ENCODE measurements at regions of chr9 and their contacts with region 1.

Region 1: DNA sequence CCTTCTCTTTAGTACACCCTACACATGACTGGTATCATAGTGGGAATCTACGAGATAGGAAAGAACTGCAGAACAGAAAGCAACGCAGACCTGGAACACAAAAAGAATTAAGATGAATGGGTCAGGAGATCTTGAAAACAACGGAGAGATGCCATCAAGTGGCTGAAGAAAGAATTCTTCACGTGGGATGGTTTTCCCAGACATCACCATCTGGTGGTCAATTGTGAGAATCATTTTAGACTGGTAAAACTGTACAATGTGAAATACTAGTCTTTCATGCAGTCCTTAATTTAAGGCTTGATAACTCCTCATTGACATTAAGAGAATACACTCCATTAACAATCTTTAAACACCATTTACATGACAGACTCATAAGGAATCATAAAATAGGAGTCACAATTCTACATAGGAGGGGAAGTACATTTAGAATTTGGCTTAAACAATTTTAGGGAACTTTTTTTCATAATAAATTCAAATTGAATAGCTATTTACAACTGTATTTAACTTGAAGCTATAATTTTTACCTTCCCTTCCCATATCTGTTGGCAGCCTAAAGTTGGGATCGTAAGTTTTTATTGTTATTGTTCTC is 128.4 kb upstream of the TRPM3 start:
- H3K4me3 Mint-ChIP-seq: no peak overlapping the region
- H3K27ac Mint-ChIP-seq: no peak overlapping the region
- H3K4me1 Mint-ChIP-seq: no peaks in the 10 kb centered on the region
- H3K27me3 Mint-ChIP-seq: peaks cover 1% of the 10 kb centered on the region

Region 2: GRCh38 chr9:70639853-70640814 is 609.7 kb before region 1 on chr9:
- intact Hi-C with region 1: loop called (anchors 2 kb)
- H3K4me3 Mint-ChIP-seq: no peak overlapping the region
- H3K27ac Mint-ChIP-seq: no peak overlapping the region
- H3K4me1 Mint-ChIP-seq: no peaks in the 10 kb centered on the region
- H3K27me3 Mint-ChIP-seq: no peaks in the 10 kb centered on the region

Region 3: DNA sequence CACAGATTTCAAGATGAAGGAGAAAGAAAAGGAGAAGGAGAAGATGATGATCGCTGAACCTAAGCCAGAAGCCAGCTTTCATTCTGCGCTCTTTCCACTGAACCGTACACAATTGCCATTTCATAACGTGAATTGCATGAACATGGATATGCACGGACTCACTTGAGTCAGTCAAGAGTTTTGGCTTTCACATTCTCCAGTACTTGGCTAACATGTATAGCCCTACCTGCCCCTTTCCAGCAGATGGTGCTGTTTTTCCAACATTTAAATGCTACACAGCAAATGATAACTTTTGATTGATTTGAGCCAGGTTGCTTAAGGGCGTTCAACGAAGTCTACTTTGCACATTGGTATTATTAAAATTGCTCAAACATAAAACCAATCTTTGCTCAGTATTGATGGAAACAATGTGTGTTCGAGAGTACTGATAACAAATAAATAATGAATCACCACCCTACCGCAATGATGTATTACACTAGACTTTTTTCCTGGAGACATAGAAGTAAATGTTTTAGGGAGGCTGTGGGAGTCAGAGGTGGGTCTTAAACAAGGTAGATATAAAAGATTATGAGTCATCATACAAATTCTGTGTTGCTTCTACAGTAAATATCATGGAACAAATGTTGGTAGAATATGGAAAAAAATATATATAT is 324.8 kb before region 1 on chr9:
- intact Hi-C with region 1: loop called (anchors 5 kb)
- H3K4me3 Mint-ChIP-seq: no peak overlapping the region
- H3K27ac Mint-ChIP-seq: no peak overlapping the region
- H3K4me1 Mint-ChIP-seq: no peaks in the 10 kb centered on the region
- H3K27me3 Mint-ChIP-seq: no peaks in the 10 kb centered on the region

Region 4: DNA sequence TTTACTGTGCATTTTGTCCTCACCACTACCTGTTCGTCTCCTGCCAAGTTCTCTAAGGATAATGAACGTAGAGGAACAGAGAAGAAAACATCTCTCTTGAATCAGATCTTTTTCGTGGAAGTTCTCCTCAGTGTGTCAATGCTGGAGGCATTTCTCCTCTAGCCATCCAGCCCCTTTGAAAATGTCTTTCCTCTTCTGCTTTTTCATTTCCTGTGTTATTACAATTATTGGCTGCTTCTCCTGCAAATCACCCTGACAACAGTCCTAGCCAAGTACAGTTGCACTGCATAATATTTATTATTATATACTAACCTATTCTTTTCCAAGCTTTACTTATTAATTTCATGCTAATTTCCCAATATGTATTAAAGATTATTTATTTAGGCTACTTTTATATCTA is 66.6 kb before region 1 on chr9:
- intact Hi-C with region 1: no loop called
- H3K4me3 Mint-ChIP-seq: no peak overlapping the region
- H3K27ac Mint-ChIP-seq: no peak overlapping the region
- H3K4me1 Mint-ChIP-seq: no peaks in the 10 kb centered on the region
- H3K27me3 Mint-ChIP-seq: no peaks in the 10 kb centered on the region